ENCODE measurements at regions of chr9 and their contacts with region 1.

Region 1: DNA sequence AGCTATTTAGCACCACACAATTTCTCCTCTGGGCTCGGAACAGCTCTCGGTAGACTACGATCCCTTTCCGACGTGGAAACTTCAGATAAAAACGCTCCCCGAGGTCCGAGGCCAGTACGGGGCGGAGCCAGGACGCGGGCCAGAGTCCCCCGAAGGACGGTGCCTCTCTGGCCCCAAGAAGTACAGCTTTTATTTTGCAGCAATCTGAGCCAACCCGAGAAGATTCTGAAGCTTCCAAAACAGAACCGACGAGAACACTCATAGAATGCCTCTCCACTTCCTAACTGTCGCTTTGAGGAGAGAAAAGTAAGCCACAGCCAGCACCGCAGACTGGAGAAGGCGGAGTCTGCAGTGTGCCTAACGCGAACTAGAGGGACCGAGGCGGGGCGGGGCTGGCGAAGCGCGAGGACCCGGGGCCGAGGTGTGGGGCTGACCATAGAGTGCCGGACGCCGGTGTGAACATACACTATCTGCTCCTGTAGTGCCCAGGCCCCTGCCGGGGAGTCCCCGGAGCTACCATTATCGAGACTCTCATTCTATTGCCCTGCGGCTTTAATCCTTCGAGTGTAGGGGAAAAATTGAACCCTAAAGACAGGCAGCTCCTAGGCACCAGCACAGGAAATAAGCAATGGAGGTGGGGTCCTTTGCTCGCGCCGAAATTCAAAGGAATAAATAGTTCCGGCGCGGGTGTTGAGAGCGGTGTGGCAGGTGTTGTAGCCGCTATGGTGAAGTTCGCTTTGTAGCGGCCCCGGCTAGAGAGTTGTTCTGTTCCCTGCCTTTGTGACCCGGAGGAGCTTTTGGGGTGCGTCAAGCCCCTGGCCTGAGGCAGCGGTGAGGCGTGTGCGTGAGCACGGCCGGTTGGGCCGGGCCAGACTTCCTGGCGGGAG is at the start of gene SMC2:
- H3K4me3 Mint-ChIP-seq: peak within 1 kb of the TSS; percentile 98
- H3K27ac Mint-ChIP-seq: peak within 1 kb of the TSS; percentile 94
- H3K4me1 Mint-ChIP-seq: peaks cover 36% of the 10 kb centered on the region
- H3K27me3 Mint-ChIP-seq: no peaks in the 10 kb centered on the region

Region 2: GRCh38 chr9:103545260-103545659 is 548.6 kb before region 1 on chr9:
- intact Hi-C with region 1: no loop called
- H3K4me3 Mint-ChIP-seq: no peak overlapping the region
- H3K27ac Mint-ChIP-seq: no peak overlapping the region
- H3K4me1 Mint-ChIP-seq: no peaks in the 10 kb centered on the region
- H3K27me3 Mint-ChIP-seq: no peaks in the 10 kb centered on the region

Region 3: DNA sequence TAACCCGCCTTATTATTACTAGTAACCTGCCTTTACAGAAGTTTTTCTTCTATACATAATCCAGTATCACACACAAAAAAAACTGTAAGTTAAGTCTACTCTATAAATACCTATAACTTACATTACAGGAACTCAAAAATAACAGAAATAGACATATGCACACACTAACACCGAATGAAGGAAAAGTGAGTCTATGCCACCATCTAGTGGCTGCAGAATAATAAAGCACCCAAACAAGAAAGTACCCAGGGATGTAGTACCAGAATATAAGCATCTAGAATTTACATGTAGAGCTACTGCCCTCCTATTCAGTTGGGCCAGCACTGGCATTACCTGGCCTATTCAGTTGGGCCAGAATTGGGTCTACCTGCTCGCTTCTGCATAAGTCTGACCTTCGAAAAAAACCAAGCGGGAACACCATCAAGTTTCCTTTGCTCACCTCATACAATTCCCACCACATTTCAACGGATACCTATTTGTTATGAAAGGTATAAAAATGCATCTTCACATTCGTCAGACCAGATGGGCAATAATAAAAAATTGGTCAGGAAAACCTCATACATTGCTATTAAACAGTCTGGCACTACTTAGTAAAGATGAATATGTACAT is 649.6 kb after region 1 on chr9:
- intact Hi-C with region 1: loop called (anchors 5 kb)
- H3K4me3 Mint-ChIP-seq: no peak overlapping the region
- H3K27ac Mint-ChIP-seq: no peak overlapping the region
- H3K4me1 Mint-ChIP-seq: peaks cover 11% of the 10 kb centered on the region
- H3K27me3 Mint-ChIP-seq: no peaks in the 10 kb centered on the region

Region 4: DNA sequence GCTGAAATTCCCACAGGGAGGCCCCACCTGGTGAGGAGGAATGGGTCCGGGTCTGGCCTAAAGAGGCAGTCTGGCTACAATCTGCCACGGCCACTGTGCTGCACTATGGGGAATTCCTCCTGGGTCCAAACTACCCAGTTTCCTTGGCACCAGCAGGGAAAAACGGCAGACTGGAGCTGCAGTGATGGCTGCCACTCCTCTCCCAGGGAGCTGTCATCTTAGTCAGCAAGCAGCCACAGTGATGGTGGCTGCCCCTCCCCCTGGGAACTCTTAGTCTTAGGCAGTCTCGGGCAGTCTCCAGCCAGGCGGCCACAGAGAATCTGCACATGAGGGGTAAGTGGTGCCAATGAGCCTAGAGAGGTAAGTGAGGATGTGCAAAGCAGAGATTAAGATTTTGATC is 1806.2 kb after region 1 on chr9:
- intact Hi-C with region 1: no loop called
- H3K4me3 Mint-ChIP-seq: no peak overlapping the region
- H3K27ac Mint-ChIP-seq: no peak overlapping the region
- H3K4me1 Mint-ChIP-seq: no peaks in the 10 kb centered on the region
- H3K27me3 Mint-ChIP-seq: no peaks in the 10 kb centered on the region

Measured in dendritic cell treated with granulocyte-macrophage colony-stimulating factor and Interleukin-4, amounts not matched to agents 40 ng/mL and 50 ng/mL, for 4 days (primary cell).